Cardiac septum (tissue), 1 donor: ENCODE measurements at regions of chr18 and their contacts with region 1.

Region 1: DNA sequence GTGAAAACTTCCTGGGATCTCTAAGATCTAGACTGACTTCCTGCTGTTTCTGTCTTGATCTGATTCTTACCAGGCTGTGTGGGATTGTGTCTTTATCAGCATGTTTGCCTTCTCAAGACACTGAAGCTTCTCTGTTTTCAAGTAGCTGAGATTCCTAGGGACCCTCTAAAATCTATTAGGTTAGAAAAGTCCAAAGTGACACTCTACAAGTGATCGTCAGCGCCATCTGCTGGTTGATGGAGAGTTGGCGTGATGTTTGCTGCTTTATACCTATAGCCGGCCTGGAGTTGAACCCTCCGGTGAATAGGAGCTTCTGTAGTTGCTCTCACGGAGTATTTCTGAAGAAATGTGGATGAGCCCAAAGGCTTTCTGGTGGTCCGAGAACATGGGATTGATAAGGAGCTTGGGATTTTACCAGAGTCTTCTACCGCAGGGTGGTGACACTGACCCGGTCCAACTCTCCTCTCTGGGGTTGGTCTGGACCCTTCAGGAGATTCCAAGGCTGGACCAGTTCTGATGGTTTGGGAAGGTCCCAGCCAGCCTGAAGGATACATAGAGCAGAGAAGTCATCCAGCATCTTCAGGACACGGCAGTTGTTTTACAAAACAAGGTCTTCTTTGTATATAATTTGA is 96.0 kb upstream of the TTC39C start:
- DNase-seq: peak; percentile 80

Region 2: GRCh38 chr18:23619388-23619881 is 299.1 kb before region 1 on chr18:
- intact Hi-C with region 1: loop called (anchors 2 kb)
- DNase-seq: no peak

Region 3: GRCh38 chr18:23812546-23813440 is 105.7 kb before region 1 on chr18:
- intact Hi-C with region 1: loop called (anchors 5 kb)
- DNase-seq: no peak

Region 4: GRCh38 chr18:23828426-23828825 is 90.1 kb before region 1 on chr18:
- intact Hi-C with region 1: loop called (anchors 5 kb)
- DNase-seq: no peak

Region 5: DNA sequence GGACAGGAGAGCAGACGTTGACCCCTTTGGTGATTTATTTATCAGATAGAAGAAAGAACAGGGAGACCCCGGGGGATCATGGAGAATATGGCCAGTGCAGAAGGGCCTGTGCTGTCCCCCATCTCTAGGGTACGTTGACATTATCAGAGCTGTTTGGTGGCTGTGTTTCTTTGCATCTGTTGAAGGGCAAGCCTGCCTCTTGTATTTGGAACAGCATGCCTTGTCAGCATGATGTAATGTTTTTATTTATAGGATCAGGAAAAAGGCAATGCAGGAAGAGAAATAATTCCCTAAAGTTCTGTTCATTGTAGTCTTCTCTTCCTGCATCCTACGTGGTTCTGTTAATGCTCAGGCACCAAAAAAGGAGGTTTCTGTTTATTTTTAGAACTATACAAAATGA is 170.6 kb after region 1 on chr18:
- intact Hi-C with region 1: loop called (anchors 10 kb)
- DNase-seq: no peak